CD4-positive, alpha-beta T cell (primary cell): ENCODE measurements at regions of chr20 and their contacts with region 1.

Region 1: GRCh38 chr20:297098-297924 is at the start of gene ZCCHC3:
- DNase-seq: peak; percentile 68 to 93 (median 80)
- ATAC-seq: peak; percentile 86
- H3K4me3 ChIP-seq: peak within 1 kb of the TSS; percentile 93
- H3K4me3 Mint-ChIP-seq: peak within 1 kb of the TSS; percentile 100
- H3K27ac ChIP-seq: peak within 1 kb of the TSS; percentile 76 to 78
- H3K27ac Mint-ChIP-seq: peak within 1 kb of the TSS; percentile 98
- H3K4me1 ChIP-seq: peaks cover 30% of the 10 kb centered on the region
- H3K4me1 Mint-ChIP-seq: peaks cover 47% of the 10 kb centered on the region
- H3K27me3 ChIP-seq: no peaks in the 10 kb centered on the region
- H3K27me3 Mint-ChIP-seq: no peaks in the 10 kb centered on the region
- CTCF ChIP-seq: no peak
- total RNA-seq, gene ZCCHC3: 19.3 to 19.5 TPM

Region 2: DNA sequence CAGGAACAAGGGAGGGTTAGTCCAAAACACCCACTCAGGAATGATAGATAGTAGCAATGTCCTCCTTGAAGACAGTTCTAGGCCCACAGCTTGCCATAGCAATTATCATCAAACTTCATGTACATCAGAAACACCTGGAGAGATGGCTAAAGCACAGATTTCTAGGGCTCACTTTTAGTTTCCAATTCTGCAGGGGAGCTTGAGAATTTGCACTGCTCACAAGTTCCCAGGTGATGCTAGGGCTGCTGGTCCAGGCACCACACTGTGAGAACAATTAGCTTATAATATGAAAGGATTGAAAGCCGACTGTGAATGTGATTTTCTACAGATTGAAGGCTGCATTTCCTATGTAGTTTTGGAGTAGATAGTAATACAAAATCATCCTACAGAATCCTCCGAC is 151.4 kb before region 1 on chr20:
- CTCF ChIA-PET with region 1: no interaction called
- POLR2A ChIA-PET with region 1: no interaction called
- intact Hi-C with region 1: no loop called
- DNase-seq: no peak
- ATAC-seq: no peak
- H3K4me3 ChIP-seq: no peak overlapping the region
- H3K4me3 Mint-ChIP-seq: no peak overlapping the region
- H3K27ac ChIP-seq: no peak overlapping the region
- H3K27ac Mint-ChIP-seq: no peak overlapping the region
- H3K4me1 ChIP-seq: no peaks in the 10 kb centered on the region
- H3K4me1 Mint-ChIP-seq: no peaks in the 10 kb centered on the region
- H3K27me3 ChIP-seq: peaks cover 10 to 23% of the 10 kb centered on the region in 2 experiments
- H3K27me3 Mint-ChIP-seq: peaks cover 58% of the 10 kb centered on the region
- CTCF ChIP-seq: no peak

Region 3: GRCh38 chr20:309841-310644 is 12.7 kb after region 1 on chr20:
- CTCF ChIA-PET with region 1: no interaction called
- POLR2A ChIA-PET with region 1: interaction called, 18 read pairs
- intact Hi-C with region 1: no loop called
- DNase-seq: peak; percentile 49 to 89 (median 72)
- ATAC-seq: peak; percentile 99
- H3K4me3 ChIP-seq: peak overlapping the region; percentile 40
- H3K4me3 Mint-ChIP-seq: peak overlapping the region; percentile 77
- H3K27ac ChIP-seq: no peak overlapping the region
- H3K27ac Mint-ChIP-seq: no peak overlapping the region
- H3K4me1 ChIP-seq: peaks cover 12% of the 10 kb centered on the region
- H3K4me1 Mint-ChIP-seq: peaks cover 14% of the 10 kb centered on the region
- H3K27me3 ChIP-seq: no peaks in the 10 kb centered on the region
- H3K27me3 Mint-ChIP-seq: no peaks in the 10 kb centered on the region
- CTCF ChIP-seq: no peak

Region 4: GRCh38 chr20:324177-325044 is 27.1 kb after region 1 on chr20:
- CTCF ChIA-PET with region 1: interaction called, 20 read pairs
- POLR2A ChIA-PET with region 1: interaction called, 114 read pairs
- intact Hi-C with region 1: loop called (anchors 1 kb)
- DNase-seq: peak; percentile 76 to 96 (median 88)
- ATAC-seq: peak; percentile 54
- H3K4me3 ChIP-seq: peak overlapping the region; percentile 78
- H3K4me3 Mint-ChIP-seq: peak overlapping the region; percentile 97
- H3K27ac ChIP-seq: peak overlapping the region; percentile 55 to 75
- H3K27ac Mint-ChIP-seq: peak overlapping the region; percentile 97
- H3K4me1 ChIP-seq: peaks cover 32% of the 10 kb centered on the region
- H3K4me1 Mint-ChIP-seq: peaks cover 24% of the 10 kb centered on the region
- H3K27me3 ChIP-seq: no peaks in the 10 kb centered on the region
- H3K27me3 Mint-ChIP-seq: no peaks in the 10 kb centered on the region
- CTCF ChIP-seq: peak; percentile 25

Region 5: DNA sequence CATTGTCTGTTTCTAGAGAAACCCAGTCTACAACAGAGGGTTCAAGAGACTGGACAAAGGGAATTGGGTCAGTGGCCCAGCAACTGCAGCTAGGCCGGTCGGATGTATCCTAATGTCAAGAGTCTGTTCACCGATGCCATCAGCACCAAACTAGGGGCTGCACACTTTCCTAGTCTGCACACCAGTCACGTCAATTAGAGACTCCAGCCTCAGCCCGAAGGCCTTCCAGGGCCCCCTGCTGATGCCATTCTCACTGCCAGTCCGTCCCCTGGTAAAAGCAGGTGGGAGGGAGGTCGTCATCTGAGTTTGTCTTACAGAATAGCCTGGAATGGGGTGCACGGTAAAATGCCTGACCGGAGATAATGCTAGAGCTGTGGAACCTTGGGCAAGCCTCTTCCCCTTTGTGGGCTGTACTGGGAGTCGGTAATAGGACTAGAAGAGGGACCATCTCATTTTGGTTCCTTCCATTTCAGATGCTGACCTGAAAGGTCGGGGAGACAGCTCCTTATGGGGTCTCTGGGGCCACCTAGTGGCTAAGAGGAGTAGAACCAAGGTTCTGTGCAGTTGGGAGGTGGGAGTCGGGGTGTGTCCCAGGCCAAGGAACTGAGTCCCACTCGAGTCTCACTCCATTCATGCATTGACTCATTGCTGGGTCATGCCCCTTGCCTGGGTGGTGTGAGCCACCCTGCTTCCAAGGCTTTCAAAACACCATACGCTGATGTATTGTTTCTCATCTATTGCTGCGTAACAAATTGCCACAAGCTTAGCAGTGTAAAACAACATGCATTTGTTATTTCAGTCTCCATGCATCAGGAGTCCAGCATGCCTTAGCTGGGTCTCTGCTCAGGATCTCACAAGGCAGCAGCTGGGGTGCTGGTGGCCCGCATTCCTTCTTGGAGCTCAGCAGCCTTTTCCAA is 33.2 kb after region 1 on chr20:
- CTCF ChIA-PET with region 1: interaction called, 20 read pairs
- POLR2A ChIA-PET with region 1: interaction called, 114 read pairs
- intact Hi-C with region 1: loop called (anchors 1 kb)
- DNase-seq: peak in 13 of 14 experiments; percentile 39 to 85 (median 53)
- ATAC-seq: peak; percentile 44
- H3K4me3 ChIP-seq: no peak overlapping the region
- H3K4me3 Mint-ChIP-seq: peak overlapping the region; percentile 76
- H3K27ac ChIP-seq: no peak overlapping the region
- H3K27ac Mint-ChIP-seq: peak overlapping the region; percentile 74
- H3K4me1 ChIP-seq: peaks cover 20% of the 10 kb centered on the region
- H3K4me1 Mint-ChIP-seq: peaks cover 32% of the 10 kb centered on the region
- H3K27me3 ChIP-seq: no peaks in the 10 kb centered on the region
- H3K27me3 Mint-ChIP-seq: no peaks in the 10 kb centered on the region
- CTCF ChIP-seq: peak; percentile 93

Region 6: DNA sequence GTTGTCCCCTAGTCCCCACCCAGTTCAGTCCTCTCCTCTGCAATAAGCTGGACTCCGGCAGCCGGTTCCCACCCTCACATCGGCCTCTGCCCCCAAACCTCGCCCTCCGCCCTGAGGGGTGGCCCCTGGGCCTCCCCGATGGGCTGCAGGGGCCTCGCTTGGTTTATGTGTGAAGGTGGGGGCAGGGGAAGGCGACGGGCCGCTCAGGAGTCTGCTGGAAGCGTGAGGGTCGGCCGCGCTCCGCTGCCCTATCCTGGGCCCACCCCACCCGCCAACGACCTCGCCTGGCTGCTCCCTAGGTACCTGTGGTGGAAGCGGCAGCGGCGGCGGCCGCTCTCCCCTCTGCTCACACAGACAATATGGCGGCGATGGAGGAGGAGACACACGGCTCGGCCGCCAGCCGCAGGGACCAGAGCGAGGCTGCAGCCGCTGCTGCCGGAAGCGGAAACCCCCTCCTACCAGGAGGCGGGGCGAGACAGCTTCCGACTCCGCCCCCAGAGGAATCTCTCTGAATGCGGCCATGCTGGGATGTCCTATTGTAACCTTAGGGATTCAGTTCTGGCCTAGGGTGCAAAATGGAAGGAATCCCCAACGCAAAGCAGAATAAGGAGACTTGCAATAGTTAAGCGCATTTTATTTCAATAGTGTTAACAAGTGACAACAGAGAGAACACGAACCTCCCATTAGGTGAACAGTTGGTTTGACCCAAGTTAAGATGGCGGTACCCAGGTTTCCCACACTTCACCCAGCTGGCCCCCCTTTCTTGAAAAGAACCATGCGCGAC is 246.2 kb after region 1 on chr20 and contains the start of gene CSNK2A1:
- CTCF ChIA-PET with region 1: no interaction called
- POLR2A ChIA-PET with region 1: interaction called, 5 read pairs
- intact Hi-C with region 1: loop called in 1 of 2 experiments (anchors 5 kb)
- DNase-seq: peak; percentile 91 to 98 (median 96)
- ATAC-seq: peak; percentile 91
- H3K4me3 ChIP-seq: peak within 1 kb of the TSS; percentile 88
- H3K4me3 Mint-ChIP-seq: peak within 1 kb of the TSS; percentile 100
- H3K27ac ChIP-seq: peak within 1 kb of the TSS; percentile 83 to 98
- H3K27ac Mint-ChIP-seq: peak within 1 kb of the TSS; percentile 99
- H3K4me1 ChIP-seq: peaks cover 32% of the 10 kb centered on the region
- H3K4me1 Mint-ChIP-seq: peaks cover 54% of the 10 kb centered on the region
- H3K27me3 ChIP-seq: no peaks in the 10 kb centered on the region
- H3K27me3 Mint-ChIP-seq: peaks cover 12% of the 10 kb centered on the region
- CTCF ChIP-seq: no peak
- total RNA-seq, gene CSNK2A1: 55.5 to 56.9 TPM